A673 (cell line): ENCODE measurements at regions of chr10 and their contacts with region 1.

Region 1: DNA sequence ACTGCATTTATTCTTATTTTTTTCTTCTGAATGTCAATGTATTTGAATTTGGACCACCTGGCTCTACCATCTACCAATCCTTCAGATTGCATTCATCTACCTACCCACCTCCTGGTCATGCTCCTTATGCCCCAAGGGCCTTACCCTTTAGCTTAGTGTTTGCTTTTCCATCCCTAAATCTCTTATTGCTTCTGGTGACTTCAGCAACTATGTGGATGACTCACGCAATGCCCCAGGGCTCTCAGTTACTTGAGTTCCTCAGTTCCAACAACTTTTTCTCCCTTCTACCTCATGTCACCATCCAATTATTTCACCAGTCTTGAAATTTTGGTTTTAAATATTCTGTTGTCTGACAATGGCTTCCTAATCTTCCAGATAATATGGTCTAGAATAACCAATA is 118.9 kb downstream of the CFAP58 start:
- DNase-seq: no peak
- H3K4me3 ChIP-seq: no peak overlapping the region
- H3K27ac ChIP-seq: no peak overlapping the region
- H3K4me1 ChIP-seq: no peaks in the 10 kb centered on the region
- H3K27me3 ChIP-seq: peaks cover 19% of the 10 kb centered on the region
- CTCF ChIP-seq: no peak

Region 2: DNA sequence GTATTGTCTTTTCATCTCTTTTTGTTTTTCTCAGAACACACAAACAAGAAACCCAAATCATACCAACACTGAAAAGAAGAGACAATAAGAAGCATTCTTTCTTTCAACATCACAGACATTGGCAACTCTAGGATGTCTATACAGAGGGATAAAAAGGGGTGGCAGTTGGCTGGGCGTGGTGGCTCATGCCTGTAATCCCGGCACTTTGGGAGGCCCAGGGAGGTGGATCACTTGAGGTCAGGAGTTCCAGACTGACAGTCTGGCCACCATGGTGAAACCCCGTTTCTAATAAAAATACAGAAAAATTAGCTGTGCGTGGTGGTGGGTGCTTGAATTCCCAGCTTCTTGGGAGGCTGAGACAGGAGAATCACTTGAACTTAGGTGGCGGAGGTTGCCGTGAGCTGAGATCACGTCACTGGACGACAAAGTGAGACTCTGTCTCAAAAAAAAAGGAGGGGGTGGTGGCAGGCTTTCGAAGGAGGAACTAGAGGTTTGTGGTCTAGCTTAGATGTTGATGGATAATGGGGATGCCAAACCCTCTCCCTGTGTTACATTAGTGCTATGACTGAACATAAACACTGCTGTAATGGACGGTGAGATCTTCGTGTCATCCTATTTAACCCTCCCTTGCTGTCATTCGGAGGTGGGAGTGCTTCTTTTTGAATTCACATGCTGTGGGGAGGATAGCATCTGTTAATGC is 1545.0 kb before region 1 on chr10:
- CTCF ChIA-PET with region 1: no interaction called
- POLR2A ChIA-PET with region 1: no interaction called
- intact Hi-C with region 1: no loop called
- DNase-seq: no peak
- H3K4me3 ChIP-seq: no peak overlapping the region
- H3K27ac ChIP-seq: no peak overlapping the region
- H3K4me1 ChIP-seq: no peaks in the 10 kb centered on the region
- H3K27me3 ChIP-seq: no peaks in the 10 kb centered on the region
- CTCF ChIP-seq: no peak

Region 3: GRCh38 chr10:104498331-104499081 is 26.0 kb after region 1 on chr10:
- CTCF ChIA-PET with region 1: interaction called, 10 read pairs
- POLR2A ChIA-PET with region 1: no interaction called
- intact Hi-C with region 1: no loop called
- DNase-seq: no peak
- H3K4me3 ChIP-seq: no peak overlapping the region
- H3K27ac ChIP-seq: no peak overlapping the region
- H3K4me1 ChIP-seq: no peaks in the 10 kb centered on the region
- H3K27me3 ChIP-seq: peaks cover 22% of the 10 kb centered on the region
- CTCF ChIP-seq: no peak

Region 4: DNA sequence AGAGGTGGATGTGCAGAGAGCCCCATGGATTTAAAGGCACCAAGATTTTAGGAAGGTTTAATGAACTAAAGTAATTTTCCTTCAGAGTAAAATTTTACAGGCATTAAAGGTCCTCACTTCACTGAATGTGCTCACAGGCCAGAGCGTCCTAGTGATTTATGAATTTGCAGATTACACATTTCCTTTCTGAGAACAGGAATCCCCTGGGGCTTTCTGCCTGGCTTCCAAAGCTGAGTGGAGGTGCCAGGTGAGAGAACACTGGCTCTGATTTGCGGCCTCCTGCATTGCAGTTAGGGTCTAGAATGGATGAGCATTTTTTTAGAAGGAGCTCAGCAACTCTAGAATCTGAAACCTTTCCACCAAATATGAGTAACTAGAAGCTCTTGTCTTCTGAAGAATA is 362.9 kb after region 1 on chr10:
- CTCF ChIA-PET with region 1: no interaction called
- POLR2A ChIA-PET with region 1: no interaction called
- intact Hi-C with region 1: no loop called
- DNase-seq: no peak
- H3K4me3 ChIP-seq: no peak overlapping the region
- H3K27ac ChIP-seq: no peak overlapping the region
- H3K4me1 ChIP-seq: no peaks in the 10 kb centered on the region
- H3K27me3 ChIP-seq: peaks cover 30% of the 10 kb centered on the region
- CTCF ChIP-seq: no peak

Region 5: GRCh38 chr10:106167946-106168345 is 1695.5 kb after region 1 on chr10:
- CTCF ChIA-PET with region 1: no interaction called
- POLR2A ChIA-PET with region 1: no interaction called
- intact Hi-C with region 1: no loop called
- DNase-seq: no peak
- H3K4me3 ChIP-seq: no peak overlapping the region
- H3K27ac ChIP-seq: no peak overlapping the region
- H3K4me1 ChIP-seq: no peaks in the 10 kb centered on the region
- H3K27me3 ChIP-seq: no peaks in the 10 kb centered on the region
- CTCF ChIP-seq: no peak